ENCODE measurements at regions of chr5 and their contacts with region 1.

Region 1: GRCh38 chr5:89277816-89278215 is 394.8 kb upstream of the MEF2C start:
- DNase-seq: no peak
- ATAC-seq: no peak
- H3K4me3 ChIP-seq: no peak overlapping the region
- H3K27ac ChIP-seq: peak overlapping the region in 2 of 4 donors; percentile 25 to 33
- H3K4me1 ChIP-seq: peaks cover 22 to 32% of the 10 kb centered on the region in 2 donors
- H3K27me3 ChIP-seq: no peaks in the 10 kb centered on the region
- CTCF ChIP-seq: no peak
- POLR2A ChIP-seq: no peak

Region 2: GRCh38 chr5:89097103-89097502 is 180.7 kb before region 1 on chr5:
- in situ Hi-C with region 1: no loop called
- intact Hi-C with region 1: loop called (anchors 10 kb)
- DNase-seq: no peak
- ATAC-seq: no peak
- H3K4me3 ChIP-seq: no peak overlapping the region
- H3K27ac ChIP-seq: no peak overlapping the region
- H3K4me1 ChIP-seq: peaks cover 0 to 4% of the 10 kb centered on the region in 2 donors
- H3K27me3 ChIP-seq: no peaks in the 10 kb centered on the region
- CTCF ChIP-seq: no peak
- POLR2A ChIP-seq: no peak

Region 3: DNA sequence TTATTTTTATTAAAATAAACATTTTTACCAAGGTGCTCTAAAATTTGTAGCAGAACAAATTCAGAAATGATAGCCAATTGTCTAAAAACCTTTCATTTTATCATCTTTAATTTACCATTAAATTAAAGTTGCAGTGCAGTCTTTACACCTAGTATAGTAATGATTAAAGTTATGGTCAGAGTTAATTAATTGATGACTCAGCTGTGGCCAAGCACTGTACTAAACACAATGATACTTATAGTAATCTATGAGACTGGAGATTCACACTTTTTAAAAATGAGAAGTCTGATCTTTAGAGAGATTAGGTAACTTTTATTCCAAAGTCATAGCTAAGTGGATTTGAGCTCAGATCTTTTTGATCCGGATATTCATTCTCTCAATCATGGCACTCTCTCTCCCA is 226.2 kb after region 1 on chr5:
- in situ Hi-C with region 1: no loop called
- intact Hi-C with region 1: no loop called
- DNase-seq: no peak
- ATAC-seq: no peak
- H3K4me3 ChIP-seq: no peak overlapping the region
- H3K27ac ChIP-seq: no peak overlapping the region
- H3K4me1 ChIP-seq: no peaks in the 10 kb centered on the region
- H3K27me3 ChIP-seq: no peaks in the 10 kb centered on the region
- CTCF ChIP-seq: no peak
- POLR2A ChIP-seq: no peak

Region 4: DNA sequence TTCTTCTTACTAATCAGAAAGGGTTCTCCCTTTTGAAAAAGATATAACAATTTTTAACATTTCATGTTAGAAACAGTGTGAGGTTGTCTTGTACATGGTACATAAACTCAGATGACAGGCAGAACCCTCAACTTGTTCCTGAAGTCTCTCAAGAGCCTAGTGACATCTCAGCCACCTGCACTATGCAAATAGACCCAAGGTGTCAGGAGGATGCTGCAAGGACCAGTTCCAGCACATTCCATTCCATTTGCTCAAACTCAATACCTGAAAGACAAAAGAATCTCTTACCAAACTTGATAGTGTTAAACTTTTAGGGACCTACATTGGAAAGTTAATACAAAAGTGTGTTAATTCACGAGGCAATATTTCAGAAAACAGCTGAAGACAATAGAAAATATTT is 587.1 kb after region 1 on chr5:
- in situ Hi-C with region 1: no loop called
- intact Hi-C with region 1: no loop called
- DNase-seq: no peak
- ATAC-seq: no peak
- H3K4me3 ChIP-seq: no peak overlapping the region
- H3K27ac ChIP-seq: no peak overlapping the region
- H3K4me1 ChIP-seq: no peaks in the 10 kb centered on the region
- H3K27me3 ChIP-seq: no peaks in the 10 kb centered on the region
- CTCF ChIP-seq: no peak
- POLR2A ChIP-seq: no peak